ENCODE measurements at regions of chr15 and their contacts with region 1.

Region 1: GRCh38 chr15:48861813-48862431 is 16.0 kb upstream of the EID1 start:
- DNase-seq: peak; percentile 71
- ATAC-seq: peak; percentile 58
- H3K4me3 ChIP-seq: no peak overlapping the region
- H3K4me3 Mint-ChIP-seq: no peak overlapping the region
- H3K27ac ChIP-seq: no peak overlapping the region
- H3K27ac Mint-ChIP-seq: no peak overlapping the region
- H3K4me1 ChIP-seq: no peaks in the 10 kb centered on the region
- H3K4me1 Mint-ChIP-seq: no peaks in the 10 kb centered on the region
- H3K27me3 ChIP-seq: no peaks in the 10 kb centered on the region
- H3K27me3 Mint-ChIP-seq: peaks cover 17% of the 10 kb centered on the region
- CTCF ChIP-seq: peak; percentile 94

Region 2: DNA sequence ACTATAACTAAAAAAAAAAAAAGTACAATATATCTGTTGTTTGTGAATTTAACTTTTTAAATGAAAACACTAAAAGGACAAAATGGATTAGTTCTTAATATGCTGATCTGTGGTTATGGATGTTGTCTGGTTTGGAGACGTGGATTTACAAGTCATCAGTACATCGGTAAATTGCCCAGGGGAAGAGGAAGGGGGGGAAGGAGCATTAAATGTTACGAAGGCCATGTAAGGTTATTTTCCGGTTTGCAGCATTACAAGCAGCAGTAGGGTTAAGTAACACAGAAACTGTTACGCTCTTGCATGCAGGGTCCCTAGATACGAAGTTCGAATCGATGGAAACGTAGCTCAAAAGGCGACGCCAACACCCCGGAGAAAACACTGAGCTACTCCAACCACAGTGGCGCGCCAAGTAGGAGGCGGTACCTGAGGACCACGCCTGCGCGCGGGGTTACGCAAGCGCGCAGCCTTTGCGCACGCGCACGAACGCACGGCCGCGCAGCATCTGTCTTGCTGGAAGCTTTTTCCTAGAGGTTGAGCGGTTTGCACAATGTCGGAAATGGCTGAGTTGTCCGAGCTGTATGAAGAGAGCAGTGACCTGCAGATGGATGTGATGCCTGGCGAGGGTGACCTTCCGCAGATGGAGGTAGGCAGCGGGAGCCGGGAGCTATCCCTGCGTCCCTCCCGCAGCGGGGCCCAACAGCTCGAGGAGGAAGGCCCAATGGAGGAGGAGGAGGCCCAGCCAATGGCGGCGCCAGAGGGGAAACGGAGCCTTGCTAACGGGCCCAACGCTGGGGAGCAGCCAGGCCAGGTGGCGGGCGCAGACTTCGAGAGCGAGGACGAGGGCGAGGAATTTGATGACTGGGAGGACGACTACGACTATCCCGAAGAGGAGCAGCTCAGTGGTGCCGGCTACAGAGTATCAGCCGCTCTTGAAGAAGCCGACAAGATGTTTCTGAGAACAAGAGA is 16.0 kb after region 1 on chr15 and contains the start of gene EID1:
- CTCF ChIA-PET with region 1: interaction called, 18 read pairs
- POLR2A ChIA-PET with region 1: no interaction called
- intact Hi-C with region 1: no loop called
- DNase-seq: peak; percentile 95
- ATAC-seq: peak; percentile 95
- H3K4me3 ChIP-seq: peak within 1 kb of the TSS; percentile 56 to 91 (median 82)
- H3K4me3 Mint-ChIP-seq: peak within 1 kb of the TSS; percentile 100
- H3K27ac ChIP-seq: peak within 1 kb of the TSS; percentile 79 to 83
- H3K27ac Mint-ChIP-seq: peak within 1 kb of the TSS; percentile 99
- H3K4me1 ChIP-seq: peaks cover 0 to 12% of the 10 kb centered on the region in 2 donors
- H3K4me1 Mint-ChIP-seq: peaks cover 25% of the 10 kb centered on the region
- H3K27me3 ChIP-seq: peaks cover 0 to 4% (median 1%) of the 10 kb centered on the region in 4 experiments
- H3K27me3 Mint-ChIP-seq: peaks cover 8% of the 10 kb centered on the region
- CTCF ChIP-seq: no peak
- total RNA-seq, gene EID1: 56.5 and 62.7 TPM in 2 replicates

Region 3: DNA sequence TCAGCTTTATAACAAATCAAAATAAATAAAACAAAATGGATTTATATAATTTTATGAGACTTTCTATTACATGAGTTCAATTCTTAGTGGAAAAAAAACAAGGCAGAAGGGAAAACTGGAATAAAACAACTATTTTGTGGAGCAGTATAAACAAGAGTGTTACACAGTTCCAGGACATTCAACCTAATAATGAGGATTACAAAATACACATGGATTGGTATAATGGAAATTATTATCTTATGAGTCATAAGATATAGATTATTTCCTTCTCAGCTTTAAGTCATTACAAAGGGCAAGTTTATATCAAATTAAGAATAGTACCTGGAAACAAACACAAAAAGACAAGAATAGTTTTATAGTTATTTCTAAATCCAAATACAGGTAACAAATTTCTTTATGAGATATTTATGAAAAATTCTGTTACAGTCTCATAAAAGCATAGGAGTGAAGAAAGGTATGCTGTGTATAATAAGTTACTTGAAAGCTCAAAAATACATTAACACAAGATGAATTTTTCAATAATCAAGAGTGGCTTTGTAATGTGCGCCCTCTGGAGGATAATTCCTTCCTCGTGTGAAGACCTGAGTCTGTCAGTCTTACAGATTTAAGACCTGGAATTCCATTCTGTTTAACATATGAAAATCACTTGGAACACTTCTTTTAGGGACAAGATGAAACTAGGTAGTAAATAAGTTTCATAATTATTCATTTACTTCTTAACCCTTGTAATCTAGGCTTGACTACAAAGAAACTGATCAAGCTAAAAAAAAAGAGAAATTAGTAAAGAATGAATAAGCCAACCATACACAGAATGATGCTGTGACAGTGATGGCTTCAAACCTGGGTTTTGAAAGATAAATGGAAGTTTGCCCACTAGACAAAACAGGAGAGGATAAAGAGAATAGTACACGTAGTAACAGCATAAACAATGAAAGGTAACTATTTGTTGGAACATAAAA is 284.0 kb after region 1 on chr15:
- CTCF ChIA-PET with region 1: interaction called, 45 read pairs
- POLR2A ChIA-PET with region 1: no interaction called
- intact Hi-C with region 1: loop called (anchors 1 kb)
- DNase-seq: peak; percentile 53
- ATAC-seq: no peak
- H3K4me3 ChIP-seq: no peak overlapping the region
- H3K4me3 Mint-ChIP-seq: no peak overlapping the region
- H3K27ac ChIP-seq: peak overlapping the region in 1 of 2 donors; percentile 12
- H3K27ac Mint-ChIP-seq: no peak overlapping the region
- H3K4me1 ChIP-seq: peaks cover 5 to 14% of the 10 kb centered on the region in 2 donors
- H3K4me1 Mint-ChIP-seq: peaks cover 36% of the 10 kb centered on the region
- H3K27me3 ChIP-seq: no peaks in the 10 kb centered on the region
- H3K27me3 Mint-ChIP-seq: no peaks in the 10 kb centered on the region
- CTCF ChIP-seq: peak; percentile 70

Region 4: DNA sequence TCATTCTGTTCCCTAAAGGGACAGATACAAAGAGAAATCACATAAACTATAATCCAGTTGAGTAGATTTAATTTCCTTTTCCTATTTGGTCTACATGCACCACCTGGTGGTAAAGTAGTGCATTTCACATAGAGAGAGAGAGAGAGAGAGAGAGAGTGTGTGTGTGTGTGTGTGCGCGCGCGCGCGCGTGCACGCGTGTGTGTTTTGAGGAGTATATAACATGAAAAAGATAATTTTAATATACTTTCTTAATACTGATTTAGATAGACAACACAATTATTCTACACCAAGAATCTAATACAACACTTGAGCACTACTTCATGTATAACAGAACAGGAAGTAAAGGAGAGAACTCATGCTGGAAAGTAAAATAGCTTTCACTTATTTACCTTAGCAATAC is 560.1 kb after region 1 on chr15:
- CTCF ChIA-PET with region 1: interaction called, 101 read pairs
- POLR2A ChIA-PET with region 1: no interaction called
- intact Hi-C with region 1: no loop called
- DNase-seq: peak; percentile 63
- ATAC-seq: peak; percentile 24
- H3K4me3 ChIP-seq: peak overlapping the region in 1 of 5 experiments; percentile 8
- H3K4me3 Mint-ChIP-seq: peak overlapping the region; percentile 33
- H3K27ac ChIP-seq: no peak overlapping the region
- H3K27ac Mint-ChIP-seq: peak overlapping the region; percentile 46
- H3K4me1 ChIP-seq: no peaks in the 10 kb centered on the region
- H3K4me1 Mint-ChIP-seq: peaks cover 3% of the 10 kb centered on the region
- H3K27me3 ChIP-seq: no peaks in the 10 kb centered on the region
- H3K27me3 Mint-ChIP-seq: peaks cover 4% of the 10 kb centered on the region
- CTCF ChIP-seq: peak; percentile 73

Region 5: DNA sequence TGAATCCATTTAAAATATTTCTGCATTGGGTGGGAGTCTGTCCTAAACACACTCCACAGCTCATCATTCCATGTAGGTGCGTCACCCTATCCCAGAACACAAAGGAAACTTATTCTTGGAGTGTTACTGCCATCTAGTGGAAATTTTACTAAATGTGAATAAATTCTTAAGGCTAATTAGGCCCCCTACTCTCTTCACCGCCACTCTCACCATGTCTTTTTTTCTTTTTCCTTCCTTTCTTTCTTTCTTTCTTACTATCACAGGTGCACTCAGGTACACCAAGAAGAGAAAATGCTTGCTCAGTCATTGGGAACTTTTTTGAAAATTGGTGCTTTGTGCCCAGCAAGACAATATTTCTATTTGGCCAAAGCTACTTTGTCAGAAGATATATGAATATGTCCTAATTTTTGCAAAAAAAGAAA is 1283.5 kb after region 1 on chr15:
- CTCF ChIA-PET with region 1: interaction called, 24 read pairs
- POLR2A ChIA-PET with region 1: no interaction called
- intact Hi-C with region 1: loop called (anchors 1 kb)
- DNase-seq: peak; percentile 64
- ATAC-seq: peak; percentile 33
- H3K4me3 ChIP-seq: no peak overlapping the region
- H3K4me3 Mint-ChIP-seq: no peak overlapping the region
- H3K27ac ChIP-seq: no peak overlapping the region
- H3K27ac Mint-ChIP-seq: no peak overlapping the region
- H3K4me1 ChIP-seq: no peaks in the 10 kb centered on the region
- H3K4me1 Mint-ChIP-seq: peaks cover 4% of the 10 kb centered on the region
- H3K27me3 ChIP-seq: no peaks in the 10 kb centered on the region
- H3K27me3 Mint-ChIP-seq: no peaks in the 10 kb centered on the region
- CTCF ChIP-seq: peak; percentile 81